GM12878 (cell line): ENCODE measurements at regions of chr3 and their contacts with region 1.

Region 1: GRCh38 chr3:14780927-14781507 is 37.7 kb upstream of the FGD5 start:
- DNase-seq: peak; percentile 31
- ATAC-seq: peak; percentile 100
- H3K4me3 ChIP-seq: no peak overlapping the region
- H3K27ac ChIP-seq: no peak overlapping the region
- H3K4me1 ChIP-seq: no peaks in the 10 kb centered on the region
- H3K27me3 ChIP-seq: no peaks in the 10 kb centered on the region; a peak in 1 of 4 replicates
- CTCF ChIP-seq: peak; percentile 80 to 93 (median 87)
- EP300 ChIP-seq: no peak
- POLR2A ChIP-seq: no peak
- RAD21 ChIP-seq: peak; percentile 99

Region 2: GRCh38 chr3:14472471-14473351 is 308.3 kb before region 1 on chr3:
- CTCF ChIA-PET with region 1: no interaction called
- POLR2A ChIA-PET with region 1: no interaction called
- RAD21 ChIA-PET with region 1: no interaction called
- SMC1A ChIA-PET with region 1: no interaction called
- in situ Hi-C with region 1: no loop called
- intact Hi-C with region 1: no loop called
- DNase-seq: no peak
- ATAC-seq: no peak
- H3K4me3 ChIP-seq: no peak overlapping the region
- H3K27ac ChIP-seq: no peak overlapping the region
- H3K4me1 ChIP-seq: no peaks in the 10 kb centered on the region
- H3K27me3 ChIP-seq: no peaks in the 10 kb centered on the region
- CTCF ChIP-seq: no peak
- EP300 ChIP-seq: no peak
- POLR2A ChIP-seq: no peak
- RAD21 ChIP-seq: no peak

Region 3: GRCh38 chr3:14483266-14483665 is 297.8 kb before region 1 on chr3:
- CTCF ChIA-PET with region 1: no interaction called
- POLR2A ChIA-PET with region 1: no interaction called
- RAD21 ChIA-PET with region 1: no interaction called
- SMC1A ChIA-PET with region 1: no interaction called
- in situ Hi-C with region 1: no loop called
- intact Hi-C with region 1: no loop called
- DNase-seq: no peak
- ATAC-seq: no peak
- H3K4me3 ChIP-seq: no peak overlapping the region
- H3K27ac ChIP-seq: no peak overlapping the region
- H3K4me1 ChIP-seq: peaks cover 10% of the 10 kb centered on the region
- H3K27me3 ChIP-seq: no peaks in the 10 kb centered on the region
- CTCF ChIP-seq: no peak
- EP300 ChIP-seq: no peak
- POLR2A ChIP-seq: no peak
- RAD21 ChIP-seq: no peak

Region 4: DNA sequence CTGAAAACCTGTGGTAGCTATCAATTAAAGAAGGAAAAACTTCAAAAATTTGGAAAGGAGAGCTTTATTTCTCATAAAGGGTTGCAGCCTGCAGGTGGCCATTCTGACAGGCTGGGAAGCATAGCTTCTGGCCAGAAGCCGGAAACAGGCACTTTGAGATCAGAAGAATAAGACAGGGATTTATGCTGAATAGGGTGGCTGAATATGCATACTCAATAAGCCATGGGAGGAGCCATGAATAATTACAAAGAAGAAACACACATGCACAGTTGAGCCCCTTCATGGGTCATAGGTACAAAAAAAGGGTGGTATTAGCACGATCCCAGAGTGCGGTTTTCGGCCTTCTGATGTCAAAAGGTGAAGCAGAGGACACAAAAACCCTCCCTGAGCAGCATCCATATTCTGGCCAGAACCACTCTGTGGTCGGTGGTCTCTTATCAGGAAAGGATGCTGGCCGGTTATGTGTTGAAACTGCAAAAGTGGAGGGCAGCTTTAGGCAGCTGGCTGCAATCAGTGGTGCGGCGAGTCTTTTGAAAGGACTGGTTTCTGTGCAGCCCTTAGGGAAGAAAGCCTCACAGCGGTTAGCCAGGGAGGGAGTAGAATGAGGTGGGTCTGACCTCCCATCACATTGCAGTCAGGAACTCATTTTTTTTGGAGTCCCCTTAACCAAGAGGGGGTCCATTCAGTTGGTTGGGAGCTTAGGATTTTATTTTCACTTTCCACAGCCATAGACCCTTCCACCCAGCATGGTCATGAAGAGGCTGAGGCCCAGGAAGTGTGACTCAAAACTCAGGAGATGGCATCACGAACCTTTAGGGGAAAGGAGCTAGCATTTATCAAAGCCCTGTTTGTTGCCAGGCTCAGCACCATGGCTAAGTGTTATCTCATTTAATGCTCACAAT is 164.2 kb before region 1 on chr3:
- CTCF ChIA-PET with region 1: interaction called, 10 read pairs
- POLR2A ChIA-PET with region 1: no interaction called
- RAD21 ChIA-PET with region 1: no interaction called
- SMC1A ChIA-PET with region 1: interaction called, 3 read pairs
- in situ Hi-C with region 1: no loop called
- intact Hi-C with region 1: no loop called
- DNase-seq: no peak
- ATAC-seq: no peak
- H3K4me3 ChIP-seq: no peak overlapping the region
- H3K27ac ChIP-seq: no peak overlapping the region
- H3K4me1 ChIP-seq: no peaks in the 10 kb centered on the region
- H3K27me3 ChIP-seq: peaks cover 2 to 4% of the 10 kb centered on the region in 2 experiments; a peak in 2 of 4 replicates
- CTCF ChIP-seq: no peak
- EP300 ChIP-seq: no peak
- POLR2A ChIP-seq: no peak
- RAD21 ChIP-seq: no peak

Region 5: DNA sequence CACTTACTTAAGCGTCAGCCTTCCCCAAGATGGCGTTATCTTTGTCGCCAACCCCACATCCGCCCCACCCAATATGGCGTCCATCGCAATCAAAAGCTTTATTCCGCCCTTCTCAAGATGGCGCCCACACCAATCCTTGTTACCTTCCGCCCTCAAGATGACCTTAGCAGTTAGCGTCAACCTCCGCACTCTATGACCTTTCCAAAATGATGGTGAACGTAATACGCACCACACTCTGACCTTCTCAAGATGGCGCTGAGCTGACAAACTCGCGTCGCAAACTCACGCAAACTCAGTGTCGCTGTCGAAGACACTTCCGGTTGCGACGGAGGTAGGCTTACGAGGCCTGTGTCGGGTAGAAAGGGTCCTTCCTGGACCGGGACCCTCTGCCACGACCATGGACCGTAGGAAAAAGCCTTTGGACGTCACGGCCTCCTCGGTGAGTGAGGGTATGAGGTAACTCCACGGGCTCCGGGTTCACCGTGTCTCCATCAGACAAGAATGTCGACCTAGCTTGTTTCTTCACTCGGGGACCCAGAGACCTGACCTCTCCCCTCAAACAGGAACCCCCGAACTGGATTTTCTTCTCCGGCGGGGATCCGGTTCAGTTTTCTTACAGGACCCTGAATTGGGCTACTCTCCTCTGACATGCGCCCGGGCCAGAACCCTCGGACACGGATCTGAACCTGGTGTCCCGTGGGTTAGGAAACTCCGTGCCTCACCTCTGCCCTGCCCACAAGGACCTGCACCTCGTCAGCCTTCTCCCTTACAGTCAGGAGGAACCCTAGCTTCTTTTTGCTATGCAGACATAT is 129.4 kb before region 1 on chr3 and contains the start of gene CCDC174:
- CTCF ChIA-PET with region 1: interaction called, 53 read pairs
- POLR2A ChIA-PET with region 1: no interaction called
- RAD21 ChIA-PET with region 1: interaction called, 38 read pairs
- SMC1A ChIA-PET with region 1: interaction called, 57 read pairs
- in situ Hi-C with region 1: no loop called
- intact Hi-C with region 1: no loop called
- DNase-seq: peak; percentile 100
- ATAC-seq: peak; percentile 97
- H3K4me3 ChIP-seq: peak within 1 kb of the TSS; percentile 84
- H3K27ac ChIP-seq: peak within 1 kb of the TSS; percentile 91
- H3K4me1 ChIP-seq: no peaks in the 10 kb centered on the region
- H3K27me3 ChIP-seq: no peaks in the 10 kb centered on the region
- CTCF ChIP-seq: no peak
- EP300 ChIP-seq: no peak; a peak in 1 of 4 replicates
- POLR2A ChIP-seq: peak; percentile 99
- RAD21 ChIP-seq: no peak
- polyA plus RNA-seq, gene CCDC174: 26.1 to 31.3 TPM

Region 6: DNA sequence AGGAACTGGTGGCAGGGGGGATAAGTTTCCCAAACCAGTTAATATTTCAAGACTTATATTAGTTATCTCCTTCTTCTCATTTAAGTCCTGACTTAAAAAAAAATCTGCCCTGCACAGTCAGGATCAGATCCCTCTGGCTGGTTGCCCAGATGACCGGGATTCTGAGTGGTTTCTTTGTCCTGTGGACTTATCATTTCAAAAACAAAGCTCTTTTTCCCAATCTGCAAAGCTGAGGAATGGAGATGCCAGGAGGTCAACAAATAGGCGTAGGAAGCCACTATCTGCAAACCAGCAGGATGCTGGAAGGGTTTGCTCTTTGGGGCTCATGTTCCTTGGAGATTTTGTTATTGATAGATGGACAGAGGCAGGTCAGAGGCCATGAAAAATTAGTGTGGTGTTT is 100.3 kb before region 1 on chr3:
- CTCF ChIA-PET with region 1: interaction called, 321 read pairs
- POLR2A ChIA-PET with region 1: interaction called, 3 read pairs
- RAD21 ChIA-PET with region 1: interaction called, 197 read pairs
- SMC1A ChIA-PET with region 1: interaction called, 274 read pairs
- in situ Hi-C with region 1: no loop called
- intact Hi-C with region 1: no loop called
- DNase-seq: no peak
- ATAC-seq: no peak
- H3K4me3 ChIP-seq: no peak overlapping the region
- H3K27ac ChIP-seq: no peak overlapping the region
- H3K4me1 ChIP-seq: peaks cover 11% of the 10 kb centered on the region
- H3K27me3 ChIP-seq: no peaks in the 10 kb centered on the region
- CTCF ChIP-seq: no peak
- EP300 ChIP-seq: no peak
- POLR2A ChIP-seq: no peak
- RAD21 ChIP-seq: no peak

Region 7: GRCh38 chr3:14740983-14741382 is 40.0 kb before region 1 on chr3:
- CTCF ChIA-PET with region 1: interaction called, 10 read pairs
- POLR2A ChIA-PET with region 1: no interaction called
- RAD21 ChIA-PET with region 1: no interaction called
- SMC1A ChIA-PET with region 1: interaction called, 7 read pairs
- in situ Hi-C with region 1: no loop called
- intact Hi-C with region 1: no loop called
- DNase-seq: no peak
- ATAC-seq: no peak
- H3K4me3 ChIP-seq: no peak overlapping the region
- H3K27ac ChIP-seq: no peak overlapping the region
- H3K4me1 ChIP-seq: peaks cover 2% of the 10 kb centered on the region; the same call in 1 of the 2 replicates
- H3K27me3 ChIP-seq: no peaks in the 10 kb centered on the region
- CTCF ChIP-seq: no peak
- EP300 ChIP-seq: no peak
- POLR2A ChIP-seq: no peak
- RAD21 ChIP-seq: no peak

Region 8: GRCh38 chr3:14791343-14791945 is 10.4 kb after region 1 on chr3:
- CTCF ChIA-PET with region 1: interaction called, 53 read pairs
- POLR2A ChIA-PET with region 1: no interaction called
- RAD21 ChIA-PET with region 1: interaction called, 3 read pairs
- SMC1A ChIA-PET with region 1: interaction called, 8 read pairs
- in situ Hi-C with region 1: no loop called
- intact Hi-C with region 1: no loop called
- DNase-seq: no peak
- ATAC-seq: peak; percentile 91
- H3K4me3 ChIP-seq: no peak overlapping the region
- H3K27ac ChIP-seq: no peak overlapping the region
- H3K4me1 ChIP-seq: no peaks in the 10 kb centered on the region
- H3K27me3 ChIP-seq: no peaks in the 10 kb centered on the region; a peak in 1 of 4 replicates
- CTCF ChIP-seq: peak; percentile 63 to 76 (median 76)
- EP300 ChIP-seq: no peak
- POLR2A ChIP-seq: no peak
- RAD21 ChIP-seq: peak; percentile 80